CD14-positive monocyte (primary cell): ENCODE measurements at regions of chr12 and their contacts with region 1.

Region 1: DNA sequence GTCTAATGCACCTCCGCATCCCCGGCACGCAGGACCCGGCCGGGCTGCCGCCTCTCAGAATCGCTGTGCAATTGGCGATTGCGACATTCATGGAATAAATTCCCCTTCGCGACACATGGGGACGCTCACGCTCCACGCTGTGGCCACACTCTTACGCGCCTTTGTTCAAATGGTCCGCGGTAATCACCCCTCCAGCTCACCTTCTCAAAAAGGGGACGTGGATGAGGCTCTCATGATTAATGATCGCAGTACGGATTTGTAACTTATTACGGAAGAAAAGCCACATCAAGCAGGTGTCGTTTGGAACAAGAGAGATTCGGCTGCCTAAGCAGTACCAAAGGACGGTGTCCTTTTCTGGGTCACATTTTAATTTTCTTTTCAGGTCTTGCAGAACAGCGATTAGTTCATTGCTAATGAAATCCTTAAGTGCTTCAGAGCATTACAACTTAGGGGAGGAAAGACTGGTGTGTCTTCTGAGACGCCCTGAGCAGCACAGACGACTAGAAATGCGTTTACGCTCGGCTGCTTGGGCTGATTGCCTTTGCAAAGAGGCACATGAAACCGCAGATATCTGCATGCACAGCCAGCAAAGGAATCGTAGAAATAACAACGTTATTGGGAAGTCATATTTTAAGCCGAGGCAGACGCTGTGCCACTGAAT is 37.3 kb upstream of the ADGRD1 start:
- DNase-seq: peak; percentile 61 to 72 (median 70)
- H3K4me3 ChIP-seq: no peak overlapping the region
- H3K4me3 Mint-ChIP-seq: peak overlapping the region in 1 of 2 donors; percentile 70
- H3K27ac ChIP-seq: no peak overlapping the region
- H3K27ac Mint-ChIP-seq: peak overlapping the region in 1 of 7 donors; percentile 50
- H3K4me1 ChIP-seq: no peaks in the 10 kb centered on the region
- H3K4me1 Mint-ChIP-seq: peaks cover 6% of the 10 kb centered on the region
- H3K27me3 ChIP-seq: peaks cover 3 to 14% of the 10 kb centered on the region in 2 donors
- H3K27me3 Mint-ChIP-seq: peaks cover 13 to 24% (median 19%) of the 10 kb centered on the region in 3 donors
- CTCF ChIP-seq: peak; percentile 99

Region 2: GRCh38 chr12:130961921-130962451 is 45.6 kb after region 1 on chr12:
- intact Hi-C with region 1: loop called in 1 of 2 experiments (anchors 5 kb)
- DNase-seq: no peak
- H3K4me3 ChIP-seq: no peak overlapping the region
- H3K4me3 Mint-ChIP-seq: no peak overlapping the region
- H3K27ac ChIP-seq: no peak overlapping the region
- H3K27ac Mint-ChIP-seq: peak overlapping the region in 1 of 7 donors; percentile 43
- H3K4me1 ChIP-seq: peaks cover 23 to 24% of the 10 kb centered on the region in 2 donors
- H3K4me1 Mint-ChIP-seq: peaks cover 28% of the 10 kb centered on the region
- H3K27me3 ChIP-seq: no peaks in the 10 kb centered on the region
- H3K27me3 Mint-ChIP-seq: peaks cover 0 to 7% (median 6%) of the 10 kb centered on the region in 3 donors
- CTCF ChIP-seq: no peak

Region 3: DNA sequence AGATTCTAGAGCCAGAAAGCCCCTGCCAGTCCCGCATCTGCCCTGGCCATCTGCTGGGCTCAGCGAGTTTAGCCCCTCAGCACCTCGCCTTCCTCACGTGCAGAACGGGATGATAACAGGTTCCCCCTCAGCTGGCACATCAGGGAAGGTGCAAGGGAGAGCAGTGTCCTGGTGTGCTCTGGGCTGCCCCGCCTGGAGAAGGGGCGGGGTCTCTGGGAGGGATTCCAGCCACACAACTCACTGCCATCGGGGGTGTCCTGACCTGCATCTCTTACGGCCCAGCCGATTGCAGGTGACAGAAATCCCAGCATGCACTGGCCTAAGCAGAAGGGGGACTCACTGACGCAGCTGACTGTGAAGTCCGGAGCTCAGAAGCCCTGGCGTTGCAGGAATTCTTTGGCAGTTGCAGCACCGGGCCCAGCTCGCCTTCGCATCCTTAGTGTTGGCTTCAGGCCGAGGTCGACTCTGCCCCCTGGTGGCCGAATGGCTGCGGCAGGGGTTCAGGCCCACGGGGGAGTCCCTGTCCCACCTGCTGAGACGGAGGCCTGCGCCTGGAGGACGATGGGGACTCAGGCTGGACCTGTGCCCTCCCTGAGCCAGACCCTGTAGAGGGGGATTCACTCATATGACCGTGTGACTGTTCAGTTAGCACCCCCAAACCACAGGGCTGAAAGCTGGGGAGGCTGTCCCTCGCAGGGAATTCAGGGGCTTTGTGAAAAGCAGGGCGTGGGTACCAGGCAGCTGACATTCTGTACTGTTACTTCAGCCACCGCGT is 215.9 kb after region 1 on chr12:
- intact Hi-C with region 1: loop called (anchors 1 to 5 kb)
- DNase-seq: peak; percentile 25 to 44 (median 29)
- H3K4me3 ChIP-seq: no peak overlapping the region
- H3K4me3 Mint-ChIP-seq: no peak overlapping the region
- H3K27ac ChIP-seq: no peak overlapping the region
- H3K27ac Mint-ChIP-seq: peak overlapping the region in 1 of 7 donors; percentile 48
- H3K4me1 ChIP-seq: peaks cover 0 to 7% of the 10 kb centered on the region in 2 donors
- H3K4me1 Mint-ChIP-seq: peaks cover 13% of the 10 kb centered on the region
- H3K27me3 ChIP-seq: no peaks in the 10 kb centered on the region
- H3K27me3 Mint-ChIP-seq: peaks cover 0 to 5% (median 0%) of the 10 kb centered on the region in 3 donors
- CTCF ChIP-seq: peak; percentile 87

Region 4: DNA sequence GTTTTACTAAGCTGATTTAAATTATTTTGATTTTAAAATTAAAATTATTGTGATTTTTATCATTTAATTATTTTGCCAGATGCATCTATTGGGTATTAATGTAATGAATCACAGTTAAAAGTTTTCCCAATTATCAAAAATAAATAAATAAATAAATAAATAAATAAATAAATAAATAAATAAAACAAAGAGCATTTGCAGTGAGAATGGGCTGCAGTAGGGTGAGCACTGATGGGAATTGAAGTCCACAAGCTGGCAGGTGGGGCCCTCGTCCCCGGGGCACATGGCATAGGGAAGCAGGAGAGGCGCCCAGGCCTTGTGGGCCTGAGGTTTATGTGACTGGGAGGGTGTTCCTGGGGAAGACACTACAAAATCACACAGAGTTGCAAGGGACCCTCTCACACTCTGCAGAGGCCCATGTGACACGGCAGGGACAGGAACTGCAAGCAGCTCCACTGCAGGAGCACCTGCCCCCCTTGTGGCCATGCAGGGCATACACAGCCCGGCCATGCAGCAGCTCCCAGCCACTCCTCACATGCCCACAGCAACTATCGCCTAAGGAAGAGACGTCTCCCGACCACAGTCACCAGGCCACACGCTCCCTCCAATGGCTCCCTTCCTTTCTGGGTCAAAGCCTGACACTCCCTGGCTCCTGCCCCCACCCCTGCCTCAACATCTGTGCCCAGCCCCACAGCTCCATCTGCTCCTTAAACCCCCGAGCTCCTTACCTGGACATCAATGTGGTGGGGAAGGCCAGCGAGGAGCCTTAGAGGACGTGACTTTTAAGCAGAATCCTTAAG is 538.2 kb after region 1 on chr12:
- intact Hi-C with region 1: loop called in 1 of 2 experiments (anchors 10 kb)
- DNase-seq: peak in 1 of 3 donors; percentile 7
- H3K4me3 ChIP-seq: no peak overlapping the region
- H3K4me3 Mint-ChIP-seq: no peak overlapping the region
- H3K27ac ChIP-seq: no peak overlapping the region
- H3K27ac Mint-ChIP-seq: peak overlapping the region in 2 of 7 donors; percentile 32 to 60
- H3K4me1 ChIP-seq: no peaks in the 10 kb centered on the region
- H3K4me1 Mint-ChIP-seq: peaks cover 9% of the 10 kb centered on the region
- H3K27me3 ChIP-seq: no peaks in the 10 kb centered on the region
- H3K27me3 Mint-ChIP-seq: peaks cover 4 to 9% (median 5%) of the 10 kb centered on the region in 3 donors
- CTCF ChIP-seq: peak; percentile 81

Region 5: GRCh38 chr12:131830335-131830913 is 914.0 kb after region 1 on chr12:
- intact Hi-C with region 1: loop called in 1 of 2 experiments (anchors 10 kb)
- DNase-seq: peak; percentile 58 to 69 (median 66)
- H3K4me3 ChIP-seq: peak overlapping the region; percentile 64 to 94 (median 69)
- H3K4me3 Mint-ChIP-seq: peak overlapping the region; percentile 69 to 81
- H3K27ac ChIP-seq: no peak overlapping the region
- H3K27ac Mint-ChIP-seq: no peak overlapping the region
- H3K4me1 ChIP-seq: peaks cover 29 to 38% of the 10 kb centered on the region in 2 donors
- H3K4me1 Mint-ChIP-seq: peaks cover 38% of the 10 kb centered on the region
- H3K27me3 ChIP-seq: peaks cover 0 to 15% of the 10 kb centered on the region in 2 donors
- H3K27me3 Mint-ChIP-seq: peaks cover 2 to 35% (median 35%) of the 10 kb centered on the region in 3 donors
- CTCF ChIP-seq: peak; percentile 88